Head of caudate nucleus (tissue), 42 donors: ENCODE measurements at regions of chr15 and their contacts with region 1.

Region 1: GRCh38 chr15:22786868-22787698 is 639 bp downstream of the NIPA1 start:
- DNase-seq: peak in 38 of 42 donors; percentile 8 to 67 (median 40)

Region 2: GRCh38 chr15:22811640-22812039 is 24.6 kb after region 1 on chr15:
- intact Hi-C with region 1: no loop called
- DNase-seq: peak in 41 of 42 donors; percentile 52 to 92 (median 79)

Region 3: GRCh38 chr15:22838292-22839042 is 51.4 kb after region 1 on chr15 and contains the start of gene NIPA2:
- intact Hi-C with region 1: loop called (anchors 2 kb)
- DNase-seq: peak; percentile 90 to 99 (median 97)